IMR-90 (cell line): ENCODE measurements at regions of chr2 and their contacts with region 1.

Region 1: GRCh38 chr2:101770726-101771125 is 73.2 kb downstream of the MAP4K4 start:
- DNase-seq: peak; percentile 62
- ATAC-seq: 0 out of 2 replicates have a peak, but pooled peaks have one; percentile 13
- H3K4me3 ChIP-seq: no peak overlapping the region
- H3K27ac ChIP-seq: no peak overlapping the region
- H3K4me1 ChIP-seq: peaks cover 25% of the 10 kb centered on the region
- H3K27me3 ChIP-seq: no peaks in the 10 kb centered on the region
- CTCF ChIP-seq: peak; percentile 36
- POLR2A ChIP-seq: no peak
- RAD21 ChIP-seq: peak; percentile 39

Region 2: DNA sequence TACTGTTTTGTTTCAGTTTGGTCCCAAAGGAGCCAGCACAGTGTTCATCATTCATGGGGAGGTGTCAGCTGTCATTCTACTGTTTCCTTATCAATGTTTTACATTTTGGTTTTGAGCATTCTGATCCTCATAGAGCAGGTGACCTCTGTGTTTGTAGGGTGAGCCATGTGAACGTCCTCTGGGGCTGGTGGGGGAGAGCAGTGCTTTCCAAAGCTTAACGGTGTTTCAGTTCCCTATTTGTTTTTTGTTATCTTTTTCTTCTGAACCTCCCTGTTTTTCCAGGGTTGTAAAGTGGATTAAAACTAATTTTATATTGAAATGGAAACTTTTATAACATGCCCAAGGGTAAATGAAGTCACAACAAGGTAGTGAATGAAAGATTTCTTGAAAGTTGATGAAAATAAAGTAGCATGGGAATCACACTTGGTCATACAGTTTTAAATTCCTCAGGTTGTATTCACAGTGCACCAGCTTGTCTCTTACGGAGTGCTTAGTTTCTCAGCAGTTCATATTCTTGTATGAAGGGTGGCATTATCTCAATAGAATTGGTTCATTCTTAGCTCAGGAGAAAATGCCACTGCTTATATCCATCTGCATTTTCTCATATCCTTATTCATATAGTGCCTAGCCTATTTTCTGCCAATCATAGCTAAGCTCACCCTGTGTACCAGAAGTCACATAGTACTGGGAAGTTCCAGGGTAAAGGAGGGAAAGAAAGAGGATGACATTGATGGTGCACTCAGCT is 18.7 kb before region 1 on chr2:
- CTCF ChIA-PET with region 1: no interaction called
- POLR2A ChIA-PET with region 1: interaction called, 14 read pairs
- dilution Hi-C with region 1: no loop called
- in situ Hi-C with region 1: no loop called
- intact Hi-C with region 1: no loop called
- DNase-seq: no peak
- ATAC-seq: no peak
- H3K4me3 ChIP-seq: no peak overlapping the region
- H3K27ac ChIP-seq: no peak overlapping the region
- H3K4me1 ChIP-seq: peaks cover 30% of the 10 kb centered on the region
- H3K27me3 ChIP-seq: no peaks in the 10 kb centered on the region
- CTCF ChIP-seq: no peak
- POLR2A ChIP-seq: no peak
- RAD21 ChIP-seq: no peak

Region 3: GRCh38 chr2:101809698-101810097 is 39.0 kb after region 1 on chr2:
- CTCF ChIA-PET with region 1: no interaction called
- POLR2A ChIA-PET with region 1: no interaction called
- dilution Hi-C with region 1: no loop called
- in situ Hi-C with region 1: no loop called
- intact Hi-C with region 1: no loop called
- DNase-seq: peak; percentile 77
- ATAC-seq: no peak
- H3K4me3 ChIP-seq: no peak overlapping the region
- H3K27ac ChIP-seq: no peak overlapping the region
- H3K4me1 ChIP-seq: peaks cover 24% of the 10 kb centered on the region
- H3K27me3 ChIP-seq: no peaks in the 10 kb centered on the region
- CTCF ChIP-seq: no peak
- POLR2A ChIP-seq: no peak
- RAD21 ChIP-seq: no peak